Posterior vena cava (tissue), 2 donors: ENCODE measurements at regions of chr6 and their contacts with region 1.

Region 1: GRCh38 chr6:46302176-46302575 is 131.4 kb upstream of the ENPP5 start:
- DNase-seq: no peak

Region 2: DNA sequence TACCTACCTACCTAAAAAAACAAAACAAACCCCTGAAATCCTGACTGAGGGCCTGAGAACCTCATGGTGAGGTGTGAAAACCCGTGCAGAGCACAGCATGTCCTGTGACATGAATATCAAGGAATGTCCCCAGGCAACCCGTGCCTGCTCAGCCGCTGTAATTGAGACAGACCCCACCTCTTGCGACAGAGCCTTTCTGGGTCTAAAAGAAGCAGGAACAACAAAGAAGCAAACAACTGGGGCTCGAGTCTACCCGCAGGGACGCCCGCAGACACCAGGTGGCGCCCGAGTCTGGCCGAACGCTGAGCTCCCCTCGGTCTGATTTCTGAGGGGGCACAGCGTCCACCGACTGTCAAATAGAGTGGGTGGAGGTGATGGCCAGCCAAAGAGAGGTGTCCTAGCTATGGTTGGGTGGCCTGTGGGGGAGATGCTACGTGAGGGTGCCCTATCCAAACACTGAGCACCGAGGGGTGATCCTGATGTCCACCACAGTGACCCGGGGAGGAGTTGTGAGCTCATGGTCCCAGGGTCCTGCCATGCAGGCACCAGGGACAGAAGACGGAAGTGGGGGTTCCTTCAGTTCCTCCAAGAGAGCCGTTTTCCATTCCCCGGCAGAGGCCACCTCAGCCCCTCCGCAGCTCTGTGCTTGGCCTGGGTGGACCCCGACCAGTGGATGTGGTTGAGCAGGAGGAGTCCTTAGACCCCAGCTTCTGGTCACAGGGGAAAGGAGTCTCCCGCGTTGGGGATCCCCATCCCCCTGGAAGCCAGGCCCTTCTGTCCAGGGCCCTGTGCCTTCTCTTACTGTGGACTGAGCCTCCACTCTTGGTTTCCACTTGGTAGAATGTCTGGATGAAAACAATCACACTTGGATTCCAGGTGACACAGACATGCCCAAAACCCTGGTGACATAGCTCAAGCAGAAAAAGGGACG is 1646.5 kb before region 1 on chr6:
- intact Hi-C with region 1: no loop called
- DNase-seq: peak; percentile 92

Region 3: GRCh38 chr6:46320516-46320915 is 18.3 kb after region 1 on chr6:
- intact Hi-C with region 1: loop called in 1 of 2 experiments (anchors 2 kb)
- DNase-seq: no peak